HepG2 (cell line): ENCODE measurements at regions of chr3 and their contacts with region 1.

Region 1: GRCh38 chr3:194395778-194396547 is 3.1 kb downstream of the GP5 start:
- DNase-seq: peak; percentile 35
- ATAC-seq: peak; percentile 83
- H3K4me3 ChIP-seq: peak overlapping the region; percentile 35 to 71 (median 56)
- H3K27ac ChIP-seq: no peak overlapping the region
- H3K4me1 ChIP-seq: peaks cover 24% of the 10 kb centered on the region
- H3K27me3 ChIP-seq: 0 out of 5 replicates have a peak, but pooled peaks cover 0 to 8% of the 10 kb centered on the region in 2 experiments
- CTCF ChIP-seq: peak; percentile 32
- EP300 ChIP-seq: no peak
- POLR2A ChIP-seq: no peak
- RAD21 ChIP-seq: no peak

Region 2: GRCh38 chr3:194250098-194251002 is 145.6 kb before region 1 on chr3:
- CTCF ChIA-PET with region 1: no interaction called
- POLR2A ChIA-PET with region 1: no interaction called
- in situ Hi-C with region 1: no loop called
- intact Hi-C with region 1: no loop called
- DNase-seq: no peak
- ATAC-seq: peak; percentile 56
- H3K4me3 ChIP-seq: peak overlapping the region in 1 of 3 experiments; percentile 45; a peak in 2 of 6 replicates
- H3K27ac ChIP-seq: peak overlapping the region; percentile 48
- H3K4me1 ChIP-seq: peaks cover 55% of the 10 kb centered on the region
- H3K27me3 ChIP-seq: peaks cover 5 to 67% of the 10 kb centered on the region in 2 experiments
- CTCF ChIP-seq: no peak
- EP300 ChIP-seq: no peak
- POLR2A ChIP-seq: no peak
- RAD21 ChIP-seq: no peak

Region 3: DNA sequence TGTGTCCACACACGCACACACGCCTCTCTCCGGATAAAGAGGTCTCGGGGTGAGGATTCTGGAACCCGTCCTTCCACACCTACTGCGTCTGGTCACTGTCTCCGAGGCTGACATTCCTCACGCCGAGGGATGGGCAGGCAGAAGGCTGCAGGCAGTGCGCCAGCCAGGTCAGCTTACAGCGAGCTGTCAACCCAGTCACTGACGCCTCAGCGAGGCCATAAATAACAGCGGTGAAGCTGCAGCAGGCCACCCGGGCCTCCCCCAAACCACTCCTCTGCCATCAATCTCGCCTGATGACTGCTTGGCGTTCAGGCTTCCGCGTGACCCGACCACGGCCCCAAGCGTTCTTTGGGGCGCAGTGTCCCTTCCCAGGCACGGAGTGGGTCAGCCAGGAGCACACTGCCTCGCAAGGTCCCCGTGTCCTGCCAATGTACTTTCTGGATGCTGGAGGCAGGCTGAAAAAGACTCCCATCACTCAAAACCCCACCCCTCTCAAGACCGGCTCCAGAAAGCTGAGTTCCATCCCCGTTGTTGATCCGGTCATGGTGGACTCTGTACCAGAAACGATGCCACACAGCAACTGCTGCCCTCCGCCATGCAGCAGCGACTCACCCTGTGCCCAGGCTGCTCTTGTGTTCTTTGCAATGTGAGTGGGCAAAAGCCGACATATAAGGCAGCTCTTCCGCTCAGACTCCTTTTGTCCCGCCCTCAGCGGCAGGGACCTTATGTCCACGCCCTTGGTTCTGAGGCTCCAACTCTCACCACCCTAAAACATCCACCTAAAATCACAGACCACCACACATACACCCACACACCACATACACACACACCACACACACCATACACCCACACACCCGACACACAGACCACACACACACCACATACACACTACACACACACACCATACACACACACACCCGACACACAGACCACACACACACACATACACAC is 71.9 kb before region 1 on chr3:
- CTCF ChIA-PET with region 1: no interaction called
- POLR2A ChIA-PET with region 1: no interaction called
- in situ Hi-C with region 1: no loop called
- intact Hi-C with region 1: no loop called
- DNase-seq: peak; percentile 59
- ATAC-seq: peak; percentile 16
- H3K4me3 ChIP-seq: peak overlapping the region; percentile 24 to 64 (median 37); a peak in 5 of 6 replicates
- H3K27ac ChIP-seq: peak overlapping the region; percentile 47
- H3K4me1 ChIP-seq: peaks cover 95% of the 10 kb centered on the region
- H3K27me3 ChIP-seq: no peaks in the 10 kb centered on the region
- CTCF ChIP-seq: no peak
- EP300 ChIP-seq: no peak
- POLR2A ChIP-seq: no peak
- RAD21 ChIP-seq: no peak

Region 4: GRCh38 chr3:194351952-194352536 is 43.9 kb before region 1 on chr3:
- CTCF ChIA-PET with region 1: no interaction called
- POLR2A ChIA-PET with region 1: interaction called, 10 read pairs
- in situ Hi-C with region 1: no loop called
- intact Hi-C with region 1: loop called (anchors 5 kb)
- DNase-seq: no peak
- ATAC-seq: no peak
- H3K4me3 ChIP-seq: peak overlapping the region in 1 of 3 experiments; percentile 86; a peak in 2 of 6 replicates
- H3K27ac ChIP-seq: no peak overlapping the region
- H3K4me1 ChIP-seq: peaks cover 24% of the 10 kb centered on the region
- H3K27me3 ChIP-seq: no peaks in the 10 kb centered on the region
- CTCF ChIP-seq: no peak
- EP300 ChIP-seq: no peak
- POLR2A ChIP-seq: no peak
- RAD21 ChIP-seq: no peak

Region 5: GRCh38 chr3:194497821-194498598 is 102.0 kb after region 1 on chr3:
- CTCF ChIA-PET with region 1: no interaction called
- POLR2A ChIA-PET with region 1: no interaction called
- in situ Hi-C with region 1: no loop called
- intact Hi-C with region 1: no loop called
- DNase-seq: peak; percentile 58
- ATAC-seq: peak; percentile 75
- H3K4me3 ChIP-seq: peak overlapping the region; percentile 31 to 58 (median 41); a peak in 4 of 6 replicates
- H3K27ac ChIP-seq: peak overlapping the region; percentile 79
- H3K4me1 ChIP-seq: peaks cover 78% of the 10 kb centered on the region
- H3K27me3 ChIP-seq: no peaks in the 10 kb centered on the region
- CTCF ChIP-seq: no peak
- EP300 ChIP-seq: peak in 1 of 2 experiments; percentile 48; a peak in 1 of 4 replicates
- POLR2A ChIP-seq: no peak
- RAD21 ChIP-seq: no peak

Region 6: GRCh38 chr3:194814878-194815357 is 419.0 kb after region 1 on chr3:
- CTCF ChIA-PET with region 1: no interaction called
- POLR2A ChIA-PET with region 1: no interaction called
- in situ Hi-C with region 1: no loop called
- intact Hi-C with region 1: loop called (anchors 5 kb)
- DNase-seq: no peak
- ATAC-seq: no peak
- H3K4me3 ChIP-seq: no peak overlapping the region
- H3K27ac ChIP-seq: no peak overlapping the region
- H3K4me1 ChIP-seq: no peaks in the 10 kb centered on the region
- H3K27me3 ChIP-seq: peaks cover 5 to 66% of the 10 kb centered on the region in 2 experiments
- CTCF ChIP-seq: no peak
- EP300 ChIP-seq: no peak
- POLR2A ChIP-seq: no peak
- RAD21 ChIP-seq: no peak